ENCODE measurements at regions of chr9 and their contacts with region 1.

Region 1: GRCh38 chr9:71806901-71807307 is 38.6 kb upstream of the CEMIP2 start:
- DNase-seq: peak in 1 of 2 donors; percentile 67
- ATAC-seq: peak; percentile 89
- H3K4me3 ChIP-seq: no peak overlapping the region
- H3K27ac ChIP-seq: no peak overlapping the region
- H3K4me1 ChIP-seq: peaks cover 0 to 3% of the 10 kb centered on the region in 2 donors
- H3K27me3 ChIP-seq: no peaks in the 10 kb centered on the region

Region 2: DNA sequence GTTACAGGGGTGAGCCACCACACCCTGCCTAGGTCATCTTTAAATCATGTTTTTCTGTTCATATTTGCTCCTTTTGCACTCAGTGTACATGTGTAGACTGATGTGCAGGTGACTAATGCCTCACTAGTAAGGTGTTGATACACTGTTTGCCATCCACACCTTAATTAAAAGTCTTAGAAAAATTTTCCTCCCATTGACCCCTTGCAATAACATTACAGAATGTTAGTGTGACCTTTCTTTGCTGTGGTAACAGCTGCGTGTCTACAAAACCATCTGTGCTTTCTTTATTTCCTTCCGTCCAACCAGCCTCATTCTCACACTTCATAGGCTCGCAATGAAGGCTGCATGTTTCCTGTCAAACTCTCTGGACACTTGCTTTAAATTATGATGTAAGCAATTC is 32.0 kb before region 1 on chr9:
- intact Hi-C with region 1: no loop called
- DNase-seq: no peak
- ATAC-seq: no peak
- H3K4me3 ChIP-seq: no peak overlapping the region
- H3K27ac ChIP-seq: no peak overlapping the region
- H3K4me1 ChIP-seq: no peaks in the 10 kb centered on the region
- H3K27me3 ChIP-seq: no peaks in the 10 kb centered on the region

Region 3: DNA sequence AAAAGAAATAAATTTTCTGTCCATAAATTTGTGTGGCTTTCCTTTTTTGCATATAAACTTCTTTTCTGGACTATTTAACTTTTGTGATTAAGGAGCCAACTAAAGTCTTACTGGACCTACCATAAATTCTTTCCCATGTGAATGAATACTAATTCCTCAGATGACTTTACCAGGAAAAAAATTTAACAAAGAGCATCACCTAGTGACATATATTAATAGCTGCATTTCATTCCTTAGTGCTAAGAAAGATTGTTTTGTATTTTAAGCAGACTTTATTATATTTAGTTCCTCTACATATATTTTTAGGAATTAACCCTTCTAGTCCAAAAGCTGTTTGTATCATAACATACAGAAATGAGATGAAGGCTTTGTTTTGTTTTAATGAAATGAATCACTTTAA is 168.9 kb after region 1 on chr9:
- intact Hi-C with region 1: loop called (anchors 5 to 10 kb)
- DNase-seq: no peak
- ATAC-seq: no peak
- H3K4me3 ChIP-seq: no peak overlapping the region
- H3K27ac ChIP-seq: no peak overlapping the region
- H3K4me1 ChIP-seq: no peaks in the 10 kb centered on the region
- H3K27me3 ChIP-seq: no peaks in the 10 kb centered on the region

Region 4: DNA sequence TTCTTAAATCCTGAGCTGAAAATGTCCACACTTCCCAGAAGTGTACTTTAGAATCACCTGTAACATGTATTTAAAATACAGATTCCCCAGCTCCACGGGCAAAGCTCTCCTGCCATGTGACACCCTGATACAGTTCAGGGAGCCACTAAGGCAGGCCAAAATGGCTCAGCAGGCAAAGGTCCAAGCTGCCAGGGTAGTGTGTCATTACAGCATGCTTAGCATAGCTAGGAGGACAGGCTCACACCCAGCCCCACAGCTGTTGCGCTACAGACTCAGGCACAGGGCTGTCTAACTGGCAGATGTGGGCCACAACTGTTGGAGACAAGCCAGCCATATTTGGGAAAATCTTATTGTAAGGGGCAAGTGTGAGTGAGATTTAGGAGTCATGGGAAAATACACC is 177.5 kb after region 1 on chr9:
- intact Hi-C with region 1: loop called (anchors 5 to 10 kb)
- DNase-seq: peak; percentile 62 to 79
- ATAC-seq: peak; percentile 29
- H3K4me3 ChIP-seq: no peak overlapping the region
- H3K27ac ChIP-seq: no peak overlapping the region
- H3K4me1 ChIP-seq: no peaks in the 10 kb centered on the region
- H3K27me3 ChIP-seq: no peaks in the 10 kb centered on the region

Region 5: GRCh38 chr9:72022841-72023240 is 215.9 kb after region 1 on chr9:
- intact Hi-C with region 1: loop called (anchors 2 to 5 kb)
- DNase-seq: no peak
- ATAC-seq: no peak
- H3K4me3 ChIP-seq: no peak overlapping the region
- H3K27ac ChIP-seq: no peak overlapping the region
- H3K4me1 ChIP-seq: no peaks in the 10 kb centered on the region
- H3K27me3 ChIP-seq: no peaks in the 10 kb centered on the region

Measured in aorta (tissue), 5 donors.